ENCODE measurements at regions of chr1 and their contacts with region 1.

Region 1: GRCh38 chr1:19199969-19200604 is 10.0 kb downstream of the UBR4 start:
- DNase-seq: no peak
- H3K4me3 ChIP-seq: no peak overlapping the region
- H3K27ac ChIP-seq: no peak overlapping the region
- H3K4me1 ChIP-seq: peaks cover 0 to 9% (median 4%) of the 10 kb centered on the region in 4 experiments
- H3K27me3 ChIP-seq: no peaks in the 10 kb centered on the region

Region 2: GRCh38 chr1:19209990-19210771 is 10.1 kb after region 1 on chr1 and contains the start of gene UBR4:
- CTCF ChIA-PET with region 1: interaction called, 11 read pairs
- POLR2A ChIA-PET with region 1: interaction called, 3 read pairs
- DNase-seq: peak; percentile 95 to 97 (median 97)
- H3K4me3 ChIP-seq: peak within 1 kb of the TSS; percentile 91 to 99 (median 96)
- H3K27ac ChIP-seq: peak within 1 kb of the TSS; percentile 95 to 98
- H3K4me1 ChIP-seq: peaks cover 24 to 63% (median 43%) of the 10 kb centered on the region in 4 experiments
- H3K27me3 ChIP-seq: no peaks in the 10 kb centered on the region

Measured in common myeloid progenitor, CD34-positive (primary cell).